GM10248 (cell line): ENCODE measurements at regions of chr1 and their contacts with region 1.

Region 1: DNA sequence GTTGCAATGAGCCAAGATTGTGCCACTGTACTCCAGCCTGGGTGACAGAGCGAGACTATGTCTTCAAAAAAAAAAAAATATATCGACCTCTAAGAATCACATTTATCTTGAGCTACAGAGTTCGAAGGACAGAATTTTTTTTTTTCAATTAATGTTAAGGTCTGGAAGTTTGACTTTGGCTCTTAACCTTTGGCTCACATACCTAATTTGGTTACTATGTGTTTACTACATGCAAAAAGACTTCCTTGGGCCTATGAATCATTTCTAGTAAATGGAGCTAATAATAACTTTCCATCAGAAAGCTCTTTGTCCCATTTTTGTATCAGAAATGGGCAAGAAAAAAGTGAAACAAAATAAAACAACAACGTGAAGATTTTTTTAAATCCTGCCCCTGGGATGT is 351.2 kb downstream of the SMYD3 start:
- DNase-seq: no peak
- CTCF ChIP-seq: no peak

Region 2: DNA sequence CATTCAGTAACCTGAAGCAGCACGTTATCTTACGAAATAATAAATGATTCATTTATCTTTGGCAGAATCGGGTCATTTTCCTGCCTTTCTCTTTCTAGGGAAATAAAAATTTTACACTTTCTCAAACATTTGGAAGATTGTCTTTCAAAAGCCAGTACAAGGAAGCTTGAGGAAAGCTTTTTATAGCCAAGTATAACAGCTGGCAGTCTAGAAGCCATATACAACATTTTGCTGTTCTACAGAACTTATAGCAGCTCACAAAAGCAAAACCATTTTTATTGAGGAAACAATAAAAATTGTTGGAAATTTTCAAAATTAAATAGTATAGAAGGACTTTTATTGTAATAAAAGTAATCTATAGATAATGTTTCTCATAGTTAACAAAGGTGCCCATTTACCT is 97.5 kb before region 1 on chr1:
- CTCF ChIA-PET with region 1: no interaction called
- POLR2A ChIA-PET with region 1: no interaction called
- DNase-seq: no peak
- CTCF ChIP-seq: no peak

Region 3: DNA sequence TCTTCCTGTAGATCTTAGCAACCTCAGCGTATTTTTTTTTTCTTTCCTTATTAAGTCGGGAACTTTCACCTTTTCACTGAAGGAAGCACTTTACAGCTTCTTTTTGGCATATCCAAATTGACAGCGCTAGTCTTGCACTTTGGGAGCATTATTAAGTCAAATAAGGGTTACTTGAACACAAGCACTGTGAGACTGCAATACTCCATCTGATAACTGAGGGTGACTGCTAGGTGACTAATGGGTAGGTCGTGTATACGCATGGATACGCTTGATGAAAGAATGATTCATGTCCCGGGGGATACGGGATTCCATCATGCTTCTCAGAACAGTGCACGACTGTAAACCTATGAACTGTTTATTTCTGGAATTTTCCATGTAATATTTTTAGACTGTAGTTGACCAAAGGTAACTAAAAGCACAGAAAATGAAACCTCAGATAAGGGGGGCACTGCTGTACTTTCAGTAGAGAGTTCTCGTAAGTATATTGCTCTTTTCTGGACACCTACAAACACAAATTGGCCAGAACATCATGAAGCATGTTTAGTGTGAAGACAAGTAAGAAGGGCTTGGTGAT is 13.5 kb before region 1 on chr1:
- CTCF ChIA-PET with region 1: interaction called, 29 read pairs
- POLR2A ChIA-PET with region 1: no interaction called
- DNase-seq: no peak
- CTCF ChIP-seq: no peak

Region 4: DNA sequence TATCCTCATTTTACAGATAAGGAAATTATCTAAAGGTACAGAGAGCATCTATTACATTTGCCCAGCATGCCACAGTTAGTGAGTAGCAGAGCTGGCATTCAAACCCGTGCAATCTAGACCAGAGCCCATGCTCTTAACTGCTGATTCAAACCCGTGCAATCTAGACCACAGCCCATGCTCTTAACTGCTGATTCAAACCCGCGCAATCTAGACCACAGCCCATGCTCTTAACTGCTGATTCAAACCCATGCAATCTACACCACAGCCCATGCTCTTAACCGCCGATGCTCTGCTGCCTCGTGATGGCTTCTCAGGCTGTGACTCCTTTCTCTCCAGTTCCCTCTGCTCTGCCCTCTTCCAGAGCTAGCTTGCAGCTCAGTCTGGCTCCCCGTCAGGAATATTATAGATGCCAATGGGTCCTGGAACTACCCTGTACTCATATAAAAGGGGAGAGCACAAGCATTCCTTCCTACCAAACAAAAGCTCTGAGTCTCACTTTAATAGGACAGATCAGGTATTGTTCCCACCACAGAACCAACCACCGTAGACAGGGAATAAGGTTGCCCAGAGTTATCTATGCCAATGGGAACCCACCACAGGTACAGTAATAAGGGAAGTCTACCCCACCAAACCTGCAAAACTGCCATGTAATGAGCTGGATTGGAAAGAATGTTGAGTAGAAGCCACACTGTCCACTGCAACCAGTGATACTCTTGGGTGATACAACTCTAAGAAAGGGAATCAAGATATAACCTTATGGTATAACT is 272.8 kb after region 1 on chr1:
- CTCF ChIA-PET with region 1: no interaction called
- POLR2A ChIA-PET with region 1: no interaction called
- DNase-seq: no peak
- CTCF ChIP-seq: no peak